Activated CD8-positive, alpha-beta memory T cell treated with anti-CD3 and anti-CD28 coated beads, Interleukin-2, amount 10 ng/mL, durations not matched to agents 7 days and 5 days (primary cell): ENCODE measurements at regions of chr14 and their contacts with region 1.

Region 1: GRCh38 chr14:101707068-101707842 is 54.3 kb upstream of the PPP2R5C start:
- DNase-seq: peak; percentile 74
- ATAC-seq: peak; percentile 63
- H3K4me3 Mint-ChIP-seq: peak overlapping the region; percentile 42
- H3K27ac Mint-ChIP-seq: peak overlapping the region; percentile 90
- H3K4me1 Mint-ChIP-seq: peaks cover 32% of the 10 kb centered on the region
- H3K27me3 Mint-ChIP-seq: peaks cover 11% of the 10 kb centered on the region

Region 2: DNA sequence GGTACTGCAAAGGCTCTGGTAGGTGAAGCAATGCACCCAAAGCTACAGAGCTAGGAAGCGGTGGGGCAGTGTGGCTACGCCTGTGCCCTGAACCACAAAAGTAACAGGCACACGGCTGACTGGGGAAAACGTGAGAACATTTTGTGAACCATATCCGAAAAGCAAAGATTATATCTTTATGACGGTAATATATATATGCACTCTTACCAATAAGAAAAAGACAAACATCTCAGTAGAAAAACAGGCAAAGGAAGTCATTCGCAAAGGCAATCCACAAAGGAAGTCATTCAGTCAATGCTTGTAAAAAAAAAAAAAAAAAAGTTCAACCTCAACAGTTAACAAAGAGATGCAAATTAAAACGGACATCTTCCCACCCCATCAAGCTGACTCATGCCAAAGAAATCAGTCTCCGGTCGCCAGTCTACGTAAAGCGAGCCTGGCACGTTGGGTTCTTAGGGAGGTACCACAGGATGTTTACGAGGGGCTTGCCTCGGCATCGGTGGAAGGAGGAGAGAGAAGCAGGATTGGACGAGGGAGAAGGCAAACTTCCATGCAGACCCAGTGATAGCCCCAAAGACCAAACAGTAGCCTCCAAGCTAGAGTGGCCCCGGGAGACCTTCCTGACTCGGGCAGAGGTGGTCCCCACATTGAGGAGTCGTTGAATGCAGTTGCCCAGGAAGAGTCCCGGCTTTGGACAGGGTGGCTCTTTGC is 14.9 kb after region 1 on chr14:
- CTCF ChIA-PET with region 1: interaction called, 32 read pairs
- DNase-seq: peak; percentile 90
- ATAC-seq: peak; percentile 87
- H3K4me3 Mint-ChIP-seq: peak overlapping the region; percentile 71
- H3K27ac Mint-ChIP-seq: peak overlapping the region; percentile 99
- H3K4me1 Mint-ChIP-seq: peaks cover 24% of the 10 kb centered on the region
- H3K27me3 Mint-ChIP-seq: no peaks in the 10 kb centered on the region

Region 3: DNA sequence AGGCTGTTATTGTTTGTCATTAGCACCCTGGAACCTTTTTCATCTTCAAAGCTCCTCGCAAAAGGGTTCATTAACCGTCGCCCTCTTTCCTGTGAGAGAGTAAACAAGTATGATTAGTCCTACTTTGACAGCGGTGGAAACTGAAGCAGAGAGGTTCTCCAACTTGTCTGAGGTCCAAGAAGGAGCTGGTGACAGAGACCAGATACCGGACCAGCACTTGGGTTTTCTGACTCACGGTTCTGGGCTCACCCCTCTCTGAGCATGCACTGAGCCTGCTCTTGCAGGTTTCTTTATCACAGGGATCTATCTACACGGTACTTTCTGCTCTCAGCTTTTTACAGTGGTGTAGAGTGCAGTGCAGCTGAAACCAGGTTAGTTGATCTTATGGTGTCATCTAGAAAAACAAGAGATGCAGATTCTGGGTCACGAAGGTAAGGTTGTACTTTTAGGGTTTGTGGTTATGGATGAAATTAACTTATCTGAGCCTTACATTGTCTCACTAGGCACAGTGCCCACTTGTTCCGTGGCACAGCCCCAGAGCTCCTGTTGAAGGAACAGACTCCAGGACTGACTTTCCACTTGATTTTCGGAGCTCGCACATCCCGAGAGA is 116.4 kb after region 1 on chr14:
- CTCF ChIA-PET with region 1: interaction called, 16 read pairs
- DNase-seq: peak; percentile 85
- ATAC-seq: peak; percentile 57
- H3K4me3 Mint-ChIP-seq: peak overlapping the region; percentile 78
- H3K27ac Mint-ChIP-seq: peak overlapping the region; percentile 98
- H3K4me1 Mint-ChIP-seq: peaks cover 81% of the 10 kb centered on the region
- H3K27me3 Mint-ChIP-seq: no peaks in the 10 kb centered on the region

Region 4: DNA sequence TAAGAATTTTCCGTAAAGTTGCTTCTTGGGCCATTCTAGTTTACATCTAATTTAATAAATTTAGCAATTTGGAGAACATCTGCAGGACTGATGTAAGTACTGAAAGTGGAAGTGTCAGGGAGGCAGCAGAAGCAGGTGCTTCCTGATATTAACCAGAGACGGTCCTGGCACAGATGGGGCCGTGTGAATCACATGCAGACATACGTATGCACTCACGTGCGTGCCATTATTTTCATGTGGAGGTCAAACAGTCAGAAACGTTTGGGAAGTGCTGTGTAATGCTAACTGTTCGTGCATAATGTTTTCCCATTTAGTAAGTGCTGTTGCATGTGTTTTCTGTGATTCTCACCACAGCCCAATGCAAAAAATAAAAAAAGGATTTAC is 169.3 kb after region 1 on chr14:
- CTCF ChIA-PET with region 1: no interaction called
- DNase-seq: peak; percentile 83
- ATAC-seq: peak; percentile 90
- H3K4me3 Mint-ChIP-seq: peak overlapping the region; percentile 61
- H3K27ac Mint-ChIP-seq: peak overlapping the region; percentile 71
- H3K4me1 Mint-ChIP-seq: peaks cover 70% of the 10 kb centered on the region
- H3K27me3 Mint-ChIP-seq: no peaks in the 10 kb centered on the region